ENCODE measurements at regions of chr6 and their contacts with region 1.

Region 1: DNA sequence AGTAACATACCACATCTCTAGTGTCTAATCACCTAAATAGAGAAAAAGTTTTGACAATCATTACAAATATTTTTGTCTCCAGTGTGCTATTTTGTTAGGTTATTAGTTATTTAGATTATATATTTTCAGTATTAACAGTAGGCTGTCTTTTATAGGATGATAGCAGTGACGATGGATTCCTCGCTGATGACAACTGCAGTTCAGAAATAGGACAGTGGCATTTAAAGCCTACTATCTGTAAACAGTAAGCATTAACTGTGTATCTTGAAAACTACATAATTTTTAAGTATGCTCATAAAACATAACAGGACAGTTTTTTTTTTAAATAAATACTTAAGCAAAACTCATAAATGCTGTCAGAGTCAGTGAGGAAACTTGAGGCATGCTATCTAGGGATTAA is 37.9 kb upstream of the MYO6 start:
- DNase-seq: no peak
- H3K4me3 ChIP-seq: no peak overlapping the region
- H3K27ac ChIP-seq: no peak overlapping the region
- H3K4me1 ChIP-seq: no peaks in the 10 kb centered on the region
- CTCF ChIP-seq: no peak

Region 2: DNA sequence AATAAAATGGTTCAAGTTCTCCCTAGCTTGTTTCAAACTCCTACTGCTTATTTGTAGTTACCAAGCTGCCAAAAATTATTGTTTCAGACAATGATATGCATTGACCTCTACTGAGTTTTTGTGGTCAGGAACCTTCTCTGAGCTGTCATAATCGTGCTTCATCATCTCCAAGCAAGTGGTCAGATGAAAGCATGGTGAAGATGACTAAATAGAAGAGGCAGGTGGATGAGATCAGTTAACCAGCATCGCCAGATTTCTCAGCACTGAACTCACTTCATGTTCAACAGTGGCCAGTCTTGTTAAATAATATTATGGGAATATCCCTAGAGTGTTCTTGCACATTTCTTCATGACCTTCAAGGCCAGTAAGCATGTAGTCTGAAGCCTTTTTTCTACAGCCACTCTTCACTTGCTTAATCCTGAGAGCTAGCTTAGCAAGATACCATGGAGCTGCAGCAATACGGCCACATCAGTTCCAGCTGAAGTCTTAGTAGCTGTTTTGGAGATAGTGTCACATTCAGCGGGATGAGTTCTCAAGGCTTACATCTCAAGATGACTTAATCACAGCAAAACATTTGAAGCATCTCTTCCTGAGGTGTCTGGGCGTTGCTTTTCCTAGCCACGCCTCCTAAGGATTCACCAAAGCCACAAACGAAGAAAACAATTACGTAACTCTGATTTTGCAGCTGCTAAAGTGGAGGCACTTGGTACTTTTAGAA is 325.0 kb before region 1 on chr6:
- CTCF ChIA-PET with region 1: no interaction called
- POLR2A ChIA-PET with region 1: no interaction called
- intact Hi-C with region 1: no loop called
- DNase-seq: no peak
- H3K4me3 ChIP-seq: no peak overlapping the region
- H3K27ac ChIP-seq: no peak overlapping the region
- H3K4me1 ChIP-seq: no peaks in the 10 kb centered on the region
- CTCF ChIP-seq: no peak

Region 3: GRCh38 chr6:75488033-75488432 is 223.1 kb before region 1 on chr6:
- CTCF ChIA-PET with region 1: no interaction called
- POLR2A ChIA-PET with region 1: no interaction called
- intact Hi-C with region 1: no loop called
- DNase-seq: no peak
- H3K4me3 ChIP-seq: no peak overlapping the region
- H3K27ac ChIP-seq: no peak overlapping the region
- H3K4me1 ChIP-seq: no peaks in the 10 kb centered on the region
- CTCF ChIP-seq: no peak

Region 4: DNA sequence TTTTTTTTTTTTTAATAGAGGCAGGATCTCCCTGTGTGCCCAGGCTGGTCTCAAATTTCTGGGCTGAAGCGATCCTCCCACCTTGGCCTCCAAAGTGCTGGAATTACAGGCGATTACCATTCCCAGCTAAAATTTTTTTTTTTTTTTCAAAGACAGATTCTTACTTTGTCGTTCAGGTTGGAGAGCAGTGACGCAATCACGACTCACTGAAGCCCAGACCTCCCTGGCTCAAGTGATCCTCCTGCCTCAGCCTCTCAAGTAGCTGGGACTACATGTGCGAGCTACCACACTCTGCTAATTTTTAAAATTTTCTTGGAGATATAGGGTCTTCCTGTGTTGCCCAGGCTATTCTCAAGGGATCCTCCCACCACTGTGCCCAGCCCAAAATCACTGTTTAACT is 20.2 kb before region 1 on chr6:
- CTCF ChIA-PET with region 1: no interaction called
- POLR2A ChIA-PET with region 1: no interaction called
- intact Hi-C with region 1: no loop called
- DNase-seq: no peak
- H3K4me3 ChIP-seq: no peak overlapping the region
- H3K27ac ChIP-seq: no peak overlapping the region
- H3K4me1 ChIP-seq: no peaks in the 10 kb centered on the region
- CTCF ChIP-seq: no peak

Region 5: GRCh38 chr6:75723382-75723781 is 12.2 kb after region 1 on chr6:
- CTCF ChIA-PET with region 1: no interaction called
- POLR2A ChIA-PET with region 1: interaction called, 13 read pairs
- intact Hi-C with region 1: no loop called
- DNase-seq: no peak
- H3K4me3 ChIP-seq: no peak overlapping the region
- H3K27ac ChIP-seq: no peak overlapping the region
- H3K4me1 ChIP-seq: no peaks in the 10 kb centered on the region
- CTCF ChIP-seq: no peak